ENCODE measurements at regions of chr20 and their contacts with region 1.

Region 1: GRCh38 chr20:44115762-44116644 is 71.0 kb downstream of the JPH2 start:
- DNase-seq: no peak
- ATAC-seq: peak; percentile 5

Region 2: DNA sequence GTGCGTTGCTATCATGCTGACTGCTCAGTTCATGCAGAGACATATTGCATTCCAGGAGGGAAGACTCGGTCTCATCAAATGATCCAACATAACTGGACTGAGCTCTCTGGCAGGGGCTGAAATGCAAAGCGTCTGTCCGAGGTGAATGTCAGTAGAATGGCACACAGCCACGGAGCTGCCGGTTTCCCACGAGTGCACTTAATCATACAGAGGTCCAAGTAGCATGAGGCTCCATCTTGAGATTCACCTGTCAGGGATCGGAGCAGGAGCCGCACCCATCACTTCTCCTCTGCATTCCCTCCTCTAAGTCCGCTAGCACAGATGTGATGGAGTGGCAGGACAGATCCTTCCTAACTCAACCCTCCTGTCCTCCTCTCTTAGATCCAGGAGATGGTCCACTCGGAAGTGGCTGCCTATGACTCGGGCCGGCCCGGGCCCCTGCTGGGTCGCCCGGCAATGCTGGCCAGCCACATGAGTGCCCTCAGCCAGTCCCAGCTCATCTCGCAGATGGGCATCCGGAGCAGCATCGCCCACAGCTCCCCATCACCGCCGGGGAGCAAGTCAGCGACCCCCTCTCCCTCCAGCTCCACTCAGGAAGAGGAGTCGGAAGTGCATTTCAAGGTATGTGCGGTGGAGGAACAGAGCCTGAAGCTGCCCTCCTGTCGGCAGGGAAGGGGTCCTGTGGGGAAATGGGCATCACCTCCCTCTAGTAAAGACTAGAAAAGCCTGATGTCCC is 64.9 kb before region 1 on chr20:
- intact Hi-C with region 1: no loop called
- DNase-seq: peak; percentile 51
- ATAC-seq: no peak

Region 3: GRCh38 chr20:44153636-44154043 is 37.6 kb after region 1 on chr20:
- intact Hi-C with region 1: loop called (anchors 2 kb)
- DNase-seq: no peak
- ATAC-seq: no peak

Region 4: GRCh38 chr20:44187051-44187762 is 71.2 kb after region 1 on chr20 and contains the start of gene JPH2:
- intact Hi-C with region 1: loop called (anchors 1 kb)
- DNase-seq: peak; percentile 78
- ATAC-seq: peak; percentile 88
- total RNA-seq, gene JPH2: 197 TPM

Measured in Right ventricle myocardium inferior (tissue), 1 donor.